Caco-2 (cell line): ENCODE measurements at regions of chr6 and their contacts with region 1.

Region 1: GRCh38 chr6:125779924-125780539 is 10.7 kb upstream of the NCOA7 start:
- DNase-seq: peak; percentile 75 to 90
- H3K4me3 ChIP-seq: peak overlapping the region; percentile 61
- H3K4me3 Mint-ChIP-seq: no peak overlapping the region
- H3K27ac Mint-ChIP-seq: no peak overlapping the region
- H3K4me1 ChIP-seq: peaks cover 13% of the 10 kb centered on the region
- H3K4me1 Mint-ChIP-seq: peaks cover 14% of the 10 kb centered on the region
- H3K27me3 ChIP-seq: no peaks in the 10 kb centered on the region
- H3K27me3 Mint-ChIP-seq: no peaks in the 10 kb centered on the region
- CTCF ChIP-seq: peak; percentile 6 to 13

Region 2: DNA sequence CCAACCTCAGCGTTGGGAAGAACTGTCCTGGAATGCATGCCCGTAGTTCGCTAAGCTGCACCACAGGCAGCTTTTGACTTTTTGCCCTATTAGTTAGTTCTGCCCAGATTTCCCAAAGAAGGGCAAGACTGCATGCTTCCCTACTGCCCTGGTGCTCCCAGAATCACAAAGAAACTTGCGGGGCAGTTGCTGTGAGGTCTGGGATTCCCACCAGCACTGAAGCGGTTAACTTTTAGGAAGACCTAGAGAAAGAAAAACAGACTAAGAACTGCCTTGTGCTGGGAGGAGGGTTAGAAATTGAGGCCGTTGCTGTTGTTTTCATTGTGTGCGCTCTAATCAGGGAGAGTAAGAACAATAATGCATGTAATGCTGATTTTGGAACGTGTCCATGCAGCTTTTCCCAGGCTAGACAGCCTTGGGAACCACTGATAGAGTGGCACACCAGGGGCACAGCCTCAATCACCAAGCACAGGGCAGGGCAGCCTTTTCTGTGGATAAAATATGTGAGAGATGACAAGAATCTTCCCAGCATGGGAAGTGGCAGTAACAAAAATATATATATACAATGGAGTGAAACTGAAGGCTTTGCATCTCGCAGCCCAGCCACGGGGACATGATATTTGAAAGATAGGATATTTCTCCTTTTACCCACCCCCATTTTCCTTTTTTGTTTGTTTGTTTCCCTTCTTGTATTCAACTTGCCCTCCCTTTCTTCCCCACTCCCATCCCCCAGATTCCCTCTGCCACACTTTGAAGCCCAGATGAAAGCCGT is 168.3 kb before region 1 on chr6:
- CTCF ChIA-PET with region 1: no interaction called
- POLR2A ChIA-PET with region 1: no interaction called
- intact Hi-C with region 1: no loop called
- DNase-seq: no peak
- H3K4me3 ChIP-seq: no peak overlapping the region
- H3K4me3 Mint-ChIP-seq: no peak overlapping the region
- H3K27ac Mint-ChIP-seq: no peak overlapping the region
- H3K4me1 ChIP-seq: no peaks in the 10 kb centered on the region
- H3K4me1 Mint-ChIP-seq: no peaks in the 10 kb centered on the region
- H3K27me3 ChIP-seq: no peaks in the 10 kb centered on the region
- H3K27me3 Mint-ChIP-seq: no peaks in the 10 kb centered on the region
- CTCF ChIP-seq: no peak

Region 3: DNA sequence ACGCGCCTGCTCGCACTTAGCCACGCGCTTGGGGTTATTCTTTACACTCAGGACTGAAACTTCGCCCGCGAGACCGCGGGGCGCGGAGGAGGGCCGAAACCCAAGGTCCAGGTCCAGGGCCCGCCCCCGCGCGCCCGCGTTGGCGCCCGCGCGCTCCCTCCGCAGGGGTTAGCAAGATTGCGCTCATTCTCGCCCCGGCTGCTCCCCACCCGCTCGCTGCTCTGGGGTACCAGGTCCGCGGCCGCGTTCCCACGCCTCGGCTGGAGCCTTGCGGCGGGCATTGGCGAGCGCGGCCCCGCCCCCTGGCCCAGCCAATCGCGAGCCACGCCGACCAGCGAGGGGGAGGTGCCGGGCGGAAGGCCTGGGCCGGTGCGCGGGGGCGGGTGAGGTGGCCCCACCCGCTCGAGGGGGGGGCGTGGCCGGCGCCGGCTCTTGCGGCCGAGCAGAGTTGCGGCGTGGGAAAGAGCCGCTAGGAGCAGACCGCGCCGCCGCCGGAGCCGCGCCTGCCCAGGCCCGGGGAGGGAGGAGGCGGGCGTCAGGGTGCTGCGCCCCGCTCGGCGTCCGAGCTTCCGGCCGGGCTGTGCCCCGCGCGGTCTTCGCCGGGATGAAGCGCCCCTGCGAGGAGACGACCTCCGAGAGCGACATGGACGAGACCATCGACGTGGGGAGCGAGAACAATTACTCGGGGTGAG is 30.7 kb before region 1 on chr6 and contains the start of gene HEY2:
- CTCF ChIA-PET with region 1: no interaction called
- POLR2A ChIA-PET with region 1: no interaction called
- intact Hi-C with region 1: loop called (anchors 1 kb)
- DNase-seq: peak; percentile 86 to 96
- H3K4me3 ChIP-seq: peak within 1 kb of the TSS; percentile 48
- H3K4me3 Mint-ChIP-seq: peak within 1 kb of the TSS; percentile 93
- H3K27ac Mint-ChIP-seq: no peak within 1 kb of the TSS
- H3K4me1 ChIP-seq: peaks cover 11% of the 10 kb centered on the region; the same call in 1 of the 2 replicates
- H3K4me1 Mint-ChIP-seq: peaks cover 22% of the 10 kb centered on the region
- H3K27me3 ChIP-seq: no peaks in the 10 kb centered on the region; the same call in none of the 2 replicates
- H3K27me3 Mint-ChIP-seq: peaks cover 33% of the 10 kb centered on the region
- CTCF ChIP-seq: no peak
- total RNA-seq, gene HEY2: 0.12 TPM in 1 of 2 replicates, not detected in the other

Region 4: DNA sequence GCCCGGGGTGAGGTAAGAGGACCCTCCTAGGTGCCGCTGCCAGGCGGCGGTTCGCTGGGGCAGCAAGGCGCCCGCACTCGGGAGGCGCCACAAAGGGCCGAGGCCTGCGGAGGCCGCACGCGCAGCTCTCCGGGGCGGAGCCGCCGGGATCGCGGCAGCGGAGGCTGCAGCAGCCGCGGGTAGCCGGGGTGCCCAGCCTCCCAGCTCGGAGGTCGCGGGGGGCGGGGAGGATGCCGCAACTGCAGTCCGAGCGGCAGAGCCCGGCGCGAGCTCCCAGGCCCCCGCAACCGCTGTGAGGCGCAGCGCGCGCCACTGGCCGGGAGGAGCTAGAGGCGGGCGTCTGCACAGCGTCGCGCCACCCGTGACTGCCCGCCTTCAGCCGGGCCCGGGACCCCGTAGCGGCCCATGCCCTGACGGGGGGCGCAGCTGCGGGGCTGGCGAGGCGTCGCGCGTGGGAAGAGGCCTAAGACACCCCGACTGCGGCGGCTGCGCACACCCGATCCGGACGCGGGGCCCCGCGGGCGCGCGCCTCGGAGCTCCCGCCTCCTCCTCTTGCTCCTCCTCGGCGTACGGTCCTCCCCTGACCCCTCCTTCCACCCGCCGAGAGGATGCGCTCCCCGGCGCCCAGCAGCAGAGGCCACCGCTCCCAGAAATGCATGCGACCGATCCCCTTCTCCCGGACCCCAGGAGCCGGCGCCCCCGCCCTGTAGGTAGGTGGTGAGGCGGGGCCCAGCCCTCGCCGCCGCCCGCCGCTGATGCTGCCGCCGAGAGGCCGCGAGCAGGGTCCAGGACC is 10.5 kb after region 1 on chr6 and contains the start of gene NCOA7:
- CTCF ChIA-PET with region 1: interaction called, 19 read pairs
- POLR2A ChIA-PET with region 1: interaction called, 21 read pairs
- intact Hi-C with region 1: loop called (anchors 1 kb)
- DNase-seq: peak; percentile 82 to 84
- H3K4me3 ChIP-seq: peak within 1 kb of the TSS; percentile 91
- H3K4me3 Mint-ChIP-seq: peak within 1 kb of the TSS; percentile 91
- H3K27ac Mint-ChIP-seq: peak within 1 kb of the TSS; percentile 88
- H3K4me1 ChIP-seq: peaks cover 20% of the 10 kb centered on the region
- H3K4me1 Mint-ChIP-seq: peaks cover 13% of the 10 kb centered on the region
- H3K27me3 ChIP-seq: no peaks in the 10 kb centered on the region
- H3K27me3 Mint-ChIP-seq: no peaks in the 10 kb centered on the region
- CTCF ChIP-seq: no peak
- total RNA-seq, gene NCOA7: 62.0 and 67.9 TPM in 2 replicates

Region 5: DNA sequence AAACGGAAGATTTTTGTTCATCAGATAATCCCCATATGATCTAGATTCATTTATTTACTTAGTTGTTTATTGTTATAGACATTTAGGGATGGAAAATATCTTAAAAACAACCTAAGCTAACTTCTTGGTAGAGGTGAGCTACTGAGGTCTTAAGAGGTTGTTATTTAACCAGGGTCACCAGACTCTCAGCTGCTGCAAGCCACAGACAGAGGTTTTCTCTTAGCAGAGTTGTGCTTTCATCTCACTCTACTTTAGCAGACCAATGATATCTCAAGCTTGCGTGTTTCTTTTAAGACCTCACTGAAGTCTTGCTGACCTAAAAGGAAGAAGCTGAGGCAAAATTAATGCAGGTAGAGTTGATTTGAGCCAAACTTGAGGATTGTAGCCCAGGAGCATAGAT is 54.3 kb after region 1 on chr6:
- CTCF ChIA-PET with region 1: no interaction called
- POLR2A ChIA-PET with region 1: no interaction called
- intact Hi-C with region 1: no loop called
- DNase-seq: no peak
- H3K4me3 ChIP-seq: no peak overlapping the region
- H3K4me3 Mint-ChIP-seq: no peak overlapping the region
- H3K27ac Mint-ChIP-seq: peak overlapping the region; percentile 39
- H3K4me1 ChIP-seq: peaks cover 15% of the 10 kb centered on the region
- H3K4me1 Mint-ChIP-seq: peaks cover 8% of the 10 kb centered on the region
- H3K27me3 ChIP-seq: no peaks in the 10 kb centered on the region
- H3K27me3 Mint-ChIP-seq: no peaks in the 10 kb centered on the region
- CTCF ChIP-seq: no peak

Region 6: GRCh38 chr6:125974214-125974866 is 194.3 kb after region 1 on chr6:
- CTCF ChIA-PET with region 1: interaction called, 3 read pairs
- POLR2A ChIA-PET with region 1: no interaction called
- intact Hi-C with region 1: loop called (anchors 1 kb)
- DNase-seq: peak in 1 of 2 experiments; percentile 41
- H3K4me3 ChIP-seq: no peak overlapping the region
- H3K4me3 Mint-ChIP-seq: no peak overlapping the region
- H3K27ac Mint-ChIP-seq: no peak overlapping the region
- H3K4me1 ChIP-seq: no peaks in the 10 kb centered on the region
- H3K4me1 Mint-ChIP-seq: no peaks in the 10 kb centered on the region
- H3K27me3 ChIP-seq: no peaks in the 10 kb centered on the region
- H3K27me3 Mint-ChIP-seq: no peaks in the 10 kb centered on the region
- CTCF ChIP-seq: peak; percentile 41 to 44